ENCODE measurements at regions of chr16 and their contacts with region 1.

Region 1: DNA sequence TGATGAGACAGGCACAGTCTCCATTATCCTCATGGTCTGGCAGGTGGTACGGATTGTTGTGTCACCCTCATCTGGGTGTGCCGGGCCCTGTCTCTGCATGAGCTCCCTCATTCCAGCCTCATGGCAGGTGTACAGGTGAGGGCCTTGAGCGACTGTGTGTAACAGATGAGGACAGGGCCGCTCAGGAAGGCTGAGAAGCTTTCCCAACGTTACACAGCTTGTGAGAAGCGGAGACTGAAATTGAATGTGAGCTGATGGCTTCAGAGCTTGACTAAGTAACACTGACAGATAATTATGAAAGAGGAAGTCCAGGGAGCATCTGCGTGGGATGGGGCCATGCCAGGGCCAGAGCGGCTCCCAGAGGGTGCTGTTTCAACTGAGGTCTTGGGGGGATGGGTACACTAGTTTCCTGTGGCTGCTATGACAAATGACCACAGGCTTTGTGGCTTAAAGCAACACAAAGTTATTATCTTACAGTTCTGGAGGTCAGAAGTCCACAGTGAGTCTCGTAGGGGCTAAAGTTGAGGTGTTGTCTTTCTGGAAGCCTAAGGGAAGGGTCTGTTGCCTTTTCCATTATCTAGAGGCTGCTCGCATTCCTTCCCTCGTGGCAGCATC is 36.7 kb downstream of the CMIP start:
- DNase-seq: no peak
- H3K4me3 ChIP-seq: no peak overlapping the region
- H3K27ac ChIP-seq: peak overlapping the region in 3 of 4 donors; percentile 11 to 20 (median 13)
- H3K4me1 ChIP-seq: peaks cover 15 to 67% (median 54%) of the 10 kb centered on the region in 4 donors
- H3K27me3 ChIP-seq: no peaks in the 10 kb centered on the region
- CTCF ChIP-seq: no peak
- EP300 ChIP-seq: no peak
- POLR2A ChIP-seq: no peak

Region 2: DNA sequence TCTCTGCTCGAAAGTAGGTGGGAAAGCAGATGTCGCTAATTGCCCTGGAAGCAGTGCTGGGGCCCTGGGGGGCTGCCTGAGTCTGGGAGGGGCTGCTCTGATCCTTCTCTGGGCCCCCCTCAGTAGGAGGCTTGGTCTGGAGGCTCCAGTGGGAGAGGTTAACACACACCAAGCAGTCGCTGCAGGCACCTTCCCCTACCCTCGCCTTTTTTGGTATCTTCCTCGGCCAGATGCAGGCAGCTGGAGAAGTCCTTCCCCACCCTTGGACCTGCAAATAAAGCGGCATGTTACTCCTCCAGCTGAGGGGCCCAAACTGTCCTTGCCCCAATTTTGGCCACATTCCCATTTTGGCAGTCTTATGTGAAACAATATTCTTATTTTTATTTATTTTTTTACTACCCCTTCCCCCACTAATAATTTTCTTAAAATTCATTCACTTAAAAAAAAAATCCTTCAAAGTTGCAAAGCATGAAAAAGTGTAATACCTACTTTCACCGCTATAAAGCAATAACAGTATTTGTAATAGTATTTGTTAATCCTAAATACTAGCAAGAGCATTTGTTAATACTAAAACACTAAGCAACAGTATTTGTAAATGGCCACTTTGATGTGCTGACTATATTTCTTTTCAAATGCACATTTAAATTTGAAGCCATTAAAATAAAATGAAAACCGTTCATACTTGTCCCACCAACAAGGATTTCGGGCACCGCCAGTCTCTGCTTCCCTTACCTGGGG is 419.3 kb before region 1 on chr16:
- intact Hi-C with region 1: no loop called
- DNase-seq: no peak
- H3K4me3 ChIP-seq: no peak overlapping the region
- H3K27ac ChIP-seq: no peak overlapping the region
- H3K4me1 ChIP-seq: no peaks in the 10 kb centered on the region
- H3K27me3 ChIP-seq: no peaks in the 10 kb centered on the region
- CTCF ChIP-seq: no peak
- EP300 ChIP-seq: no peak
- POLR2A ChIP-seq: no peak

Region 3: DNA sequence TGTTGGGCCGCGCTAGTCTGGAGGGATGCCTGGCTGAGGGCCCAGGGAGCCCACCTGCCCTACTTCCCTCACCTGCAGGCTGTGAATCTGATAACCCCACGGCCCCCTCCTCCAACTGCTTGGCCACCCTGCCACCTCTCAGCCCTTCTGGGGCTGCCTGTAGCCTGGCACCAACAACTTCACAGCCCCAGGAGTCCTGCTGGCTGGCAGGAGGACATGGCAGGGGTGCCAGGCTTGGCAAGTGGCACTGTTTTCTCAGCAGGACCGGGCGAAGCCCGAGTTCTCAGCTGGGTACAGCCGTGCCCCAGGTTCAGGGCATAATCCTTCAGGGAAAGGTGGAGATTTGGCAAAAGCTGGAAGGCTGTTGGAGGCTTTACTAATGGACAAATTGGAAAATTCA is 92.9 kb after region 1 on chr16:
- intact Hi-C with region 1: loop called (anchors 10 kb)
- DNase-seq: no peak
- H3K4me3 ChIP-seq: no peak overlapping the region
- H3K27ac ChIP-seq: no peak overlapping the region
- H3K4me1 ChIP-seq: peaks cover 0 to 18% (median 9%) of the 10 kb centered on the region in 4 donors
- H3K27me3 ChIP-seq: no peaks in the 10 kb centered on the region
- CTCF ChIP-seq: no peak
- EP300 ChIP-seq: no peak
- POLR2A ChIP-seq: no peak

Region 4: DNA sequence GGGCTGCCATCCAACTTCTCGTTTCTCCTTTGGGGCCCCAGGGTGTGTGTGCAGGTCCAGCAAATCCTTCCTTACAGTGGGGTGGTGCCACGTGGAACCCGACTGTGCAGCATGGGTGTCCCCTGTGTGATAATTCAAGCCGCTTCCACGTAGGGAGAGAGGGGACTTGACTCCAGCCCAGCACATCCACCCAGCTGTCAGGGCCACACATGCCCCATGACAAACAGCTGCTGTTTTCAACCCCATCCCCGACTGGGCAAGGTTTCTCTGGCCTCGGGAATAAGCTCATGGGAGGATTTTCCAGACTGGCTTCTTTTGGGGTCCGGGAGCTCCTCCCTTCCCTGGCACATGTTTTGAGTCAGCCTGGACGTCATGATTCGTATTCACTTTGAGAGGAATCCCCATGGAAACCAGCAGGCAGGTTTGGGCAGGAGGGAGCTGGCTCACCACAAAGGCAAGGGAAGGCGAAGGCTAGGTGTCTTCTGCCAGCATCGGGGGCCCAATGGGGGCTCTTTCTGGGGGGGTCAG is 119.7 kb after region 1 on chr16:
- intact Hi-C with region 1: no loop called
- DNase-seq: no peak
- H3K4me3 ChIP-seq: no peak overlapping the region
- H3K27ac ChIP-seq: peak overlapping the region in 3 of 4 donors; percentile 47 to 71 (median 61)
- H3K4me1 ChIP-seq: peaks cover 20 to 40% (median 33%) of the 10 kb centered on the region in 4 donors
- H3K27me3 ChIP-seq: no peaks in the 10 kb centered on the region
- CTCF ChIP-seq: no peak
- EP300 ChIP-seq: no peak
- POLR2A ChIP-seq: no peak

Region 5: DNA sequence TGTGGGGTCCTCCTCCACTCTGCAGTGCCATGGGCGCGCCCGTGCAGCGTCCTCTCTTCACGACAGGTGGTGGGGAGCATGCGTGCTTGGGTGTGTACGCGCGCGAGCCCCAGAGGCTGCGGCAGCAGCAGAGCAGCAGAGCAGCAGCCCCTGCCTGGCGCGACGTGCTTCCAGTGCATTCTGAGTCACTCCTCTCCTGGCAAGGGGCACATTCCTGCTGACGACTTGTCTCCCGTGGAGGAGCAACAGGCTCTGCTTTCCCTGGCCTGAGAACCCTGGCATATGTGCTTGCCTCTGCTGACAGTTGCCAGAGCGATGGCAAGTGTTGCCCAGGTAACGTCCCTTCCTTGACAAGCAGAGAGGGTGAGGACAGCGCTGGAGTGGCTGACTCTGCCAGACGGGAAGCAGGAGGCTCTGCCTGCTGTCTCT is 164.0 kb after region 1 on chr16:
- intact Hi-C with region 1: no loop called
- DNase-seq: no peak
- H3K4me3 ChIP-seq: peak overlapping the region in 1 of 4 donors; percentile 25
- H3K27ac ChIP-seq: peak overlapping the region; percentile 68 to 75 (median 73)
- H3K4me1 ChIP-seq: peaks cover 4 to 43% (median 21%) of the 10 kb centered on the region in 4 donors
- H3K27me3 ChIP-seq: no peaks in the 10 kb centered on the region
- CTCF ChIP-seq: no peak
- EP300 ChIP-seq: no peak
- POLR2A ChIP-seq: no peak